ENCODE measurements at regions of chr20 and their contacts with region 1.

Region 1: GRCh38 chr20:56422076-56422823 is 10.2 kb downstream of the CASS4 start:
- DNase-seq: no peak
- H3K4me3 Mint-ChIP-seq: no peak overlapping the region
- H3K27ac Mint-ChIP-seq: peak overlapping the region; percentile 1
- H3K4me1 Mint-ChIP-seq: peaks cover 50% of the 10 kb centered on the region
- H3K27me3 Mint-ChIP-seq: no peaks in the 10 kb centered on the region

Region 2: GRCh38 chr20:56411759-56412472 is 10.3 kb before region 1 on chr20 and contains the start of gene CASS4:
- CTCF ChIA-PET with region 1: interaction called, 18 read pairs
- POLR2A ChIA-PET with region 1: no interaction called
- DNase-seq: peak; percentile 56
- H3K4me3 Mint-ChIP-seq: peak within 1 kb of the TSS; percentile 78
- H3K27ac Mint-ChIP-seq: peak within 1 kb of the TSS; percentile 91
- H3K4me1 Mint-ChIP-seq: peaks cover 55% of the 10 kb centered on the region
- H3K27me3 Mint-ChIP-seq: no peaks in the 10 kb centered on the region
- total RNA-seq, gene CASS4: 8.6 to 9.0 TPM

Region 3: GRCh38 chr20:56433880-56434255 is 11.6 kb after region 1 on chr20:
- CTCF ChIA-PET with region 1: interaction called, 10 read pairs
- POLR2A ChIA-PET with region 1: no interaction called
- DNase-seq: no peak
- H3K4me3 Mint-ChIP-seq: no peak overlapping the region
- H3K27ac Mint-ChIP-seq: no peak overlapping the region
- H3K4me1 Mint-ChIP-seq: peaks cover 35% of the 10 kb centered on the region
- H3K27me3 Mint-ChIP-seq: no peaks in the 10 kb centered on the region

Measured in activated CD4-positive, alpha-beta T cell treated with anti-CD3 and anti-CD28 coated beads, Interleukin-2, amount 10 ng/mL, durations not matched to agents 7 days and 5 days (primary cell).